ENCODE measurements at regions of chr14 and their contacts with region 1.

Region 1: GRCh38 chr14:32469388-32470160 is 140.5 kb downstream of the AKAP6 start:
- DNase-seq: no peak
- H3K4me3 ChIP-seq: peak overlapping the region in 3 of 59 donors; percentile 24 to 31 (median 25)
- H3K27ac ChIP-seq: peak overlapping the region; percentile 86 to 99 (median 96)
- H3K27me3 ChIP-seq: no peaks in the 10 kb centered on the region
- CTCF ChIP-seq: peak; percentile 39 to 91 (median 74)

Region 2: DNA sequence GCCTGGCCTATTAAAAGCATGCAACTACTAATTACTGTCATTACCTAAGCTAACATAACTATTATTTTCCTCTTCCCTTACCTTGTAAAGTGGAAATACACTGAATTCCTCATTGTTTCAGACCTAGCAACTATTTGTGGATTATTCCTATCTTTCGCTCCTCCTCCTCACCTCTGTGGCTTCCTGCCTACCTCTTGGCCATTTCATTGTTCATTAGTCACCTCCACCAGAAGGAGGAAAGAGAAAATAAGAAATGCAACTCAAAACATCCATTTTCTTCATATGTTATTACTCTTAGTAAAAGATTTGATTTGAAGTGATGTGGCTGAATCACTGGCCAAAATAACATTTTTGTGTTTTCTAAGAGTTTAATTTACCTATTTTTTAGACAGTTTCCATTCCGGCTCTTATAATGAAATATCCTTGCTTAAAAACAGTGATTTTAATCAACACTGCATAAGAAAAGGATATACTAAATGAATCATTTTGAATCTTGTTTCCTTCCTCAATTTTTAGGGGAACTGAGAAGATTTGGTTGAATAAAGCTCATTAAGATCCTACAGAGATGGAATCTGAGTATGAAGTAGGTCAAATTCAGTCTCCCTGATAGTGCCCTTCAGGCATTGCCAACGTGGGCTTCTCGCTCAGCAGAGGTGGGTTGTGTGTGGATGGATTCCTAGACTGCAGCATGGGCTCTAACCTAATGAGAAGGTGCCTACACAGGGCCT is 420.0 kb before region 1 on chr14:
- intact Hi-C with region 1: no loop called
- DNase-seq: no peak
- H3K4me3 ChIP-seq: no peak overlapping the region
- H3K27ac ChIP-seq: no peak overlapping the region
- H3K27me3 ChIP-seq: no peaks in the 10 kb centered on the region
- CTCF ChIP-seq: no peak

Region 3: GRCh38 chr14:32331206-32331605 is 138.4 kb before region 1 on chr14:
- intact Hi-C with region 1: loop called in 1 of 2 experiments (anchors 5 kb)
- DNase-seq: peak in 2 of 10 donors; percentile 31 to 46
- H3K4me3 ChIP-seq: peak overlapping the region; percentile 40 to 83 (median 69)
- H3K27ac ChIP-seq: peak overlapping the region in 58 of 59 donors; percentile 36 to 95 (median 88)
- H3K27me3 ChIP-seq: no peaks in the 10 kb centered on the region
- CTCF ChIP-seq: peak in 1 of 56 donors; percentile 12

Region 4: DNA sequence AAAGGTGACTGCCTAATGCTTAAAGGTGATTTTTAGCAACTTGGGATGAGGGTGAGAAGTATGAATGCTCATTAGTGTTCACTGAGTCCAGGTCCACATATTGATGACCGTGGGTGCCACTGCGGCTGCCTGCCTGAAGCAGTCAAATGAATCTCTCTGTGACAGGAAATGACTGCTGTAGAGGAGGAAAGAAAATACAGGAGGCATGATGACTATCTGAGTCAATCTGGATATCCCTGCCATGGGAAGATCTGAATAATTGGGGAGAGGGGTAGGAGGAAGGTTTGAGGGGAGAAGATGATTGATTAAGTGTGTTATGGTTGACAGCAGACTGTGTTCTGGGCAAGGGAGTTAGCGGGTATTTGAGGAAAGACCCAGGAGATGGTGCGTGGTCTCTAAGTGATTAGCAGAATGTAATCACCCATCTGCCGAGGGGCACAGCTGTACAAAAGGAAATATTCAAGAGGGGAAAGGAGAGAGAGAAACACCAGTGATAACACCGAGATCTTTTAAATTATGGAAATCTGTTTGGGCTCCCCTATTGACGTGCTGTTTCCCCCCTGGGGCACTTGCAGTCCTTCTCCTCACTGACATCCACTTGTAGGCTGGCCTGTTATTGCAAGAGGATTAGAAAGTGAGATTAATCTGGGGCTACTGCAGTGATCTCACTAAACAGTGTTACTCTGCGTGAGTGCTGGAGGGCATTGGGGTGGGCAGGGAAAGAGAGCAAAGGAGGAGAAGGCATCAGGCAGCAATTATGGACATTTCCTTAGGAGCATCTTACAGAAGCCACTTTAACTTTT is 42.8 kb before region 1 on chr14:
- intact Hi-C with region 1: no loop called
- DNase-seq: no peak
- H3K4me3 ChIP-seq: peak overlapping the region in 6 of 59 donors; percentile 0 to 40 (median 3)
- H3K27ac ChIP-seq: peak overlapping the region in 53 of 59 donors; percentile 0 to 97 (median 67)
- H3K27me3 ChIP-seq: no peaks in the 10 kb centered on the region
- CTCF ChIP-seq: no peak

Region 5: GRCh38 chr14:32509632-32510187 is 40.1 kb after region 1 on chr14:
- intact Hi-C with region 1: loop called (anchors 1 to 2 kb)
- DNase-seq: peak; percentile 23 to 91 (median 85)
- H3K4me3 ChIP-seq: peak overlapping the region in 49 of 59 donors; percentile 5 to 61 (median 37)
- H3K27ac ChIP-seq: peak overlapping the region; percentile 80 to 100 (median 99)
- H3K27me3 ChIP-seq: no peaks in the 10 kb centered on the region
- CTCF ChIP-seq: peak in 14 of 56 donors; percentile 4 to 38 (median 16)

Region 6: DNA sequence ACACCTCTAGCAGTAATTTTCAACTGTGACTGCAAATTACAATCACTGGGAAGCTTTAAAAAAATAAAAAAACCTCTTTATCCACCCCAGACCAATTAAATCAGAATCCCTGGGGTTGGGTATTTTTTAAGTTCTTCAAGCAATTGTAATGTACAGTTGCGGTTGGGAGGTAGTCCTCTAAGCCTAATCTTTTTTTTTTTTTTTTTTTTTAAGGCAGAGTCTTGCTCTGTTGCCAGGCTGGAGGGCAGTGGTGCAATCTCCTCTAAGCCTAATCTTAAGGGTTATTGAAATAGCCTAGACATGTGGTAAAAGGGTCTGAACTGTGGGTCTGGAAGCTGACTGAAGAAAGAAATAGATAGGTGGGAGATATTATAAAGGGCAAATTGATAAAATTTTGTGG is 90.0 kb after region 1 on chr14:
- intact Hi-C with region 1: loop called in 1 of 2 experiments (anchors 10 kb)
- DNase-seq: no peak
- H3K4me3 ChIP-seq: no peak overlapping the region
- H3K27ac ChIP-seq: peak overlapping the region in 48 of 59 donors; percentile 2 to 84 (median 59)
- H3K27me3 ChIP-seq: no peaks in the 10 kb centered on the region
- CTCF ChIP-seq: no peak

Region 7: GRCh38 chr14:32779840-32780239 is 310.3 kb after region 1 on chr14:
- intact Hi-C with region 1: no loop called
- DNase-seq: no peak
- H3K4me3 ChIP-seq: no peak overlapping the region
- H3K27ac ChIP-seq: no peak overlapping the region
- H3K27me3 ChIP-seq: no peaks in the 10 kb centered on the region
- CTCF ChIP-seq: no peak

Measured in dorsolateral prefrontal cortex (tissue), 120 donors.